Activated CD4-positive, alpha-beta T cell treated with anti-CD3 and anti-CD28 coated beads for 36 hours (primary cell): ENCODE measurements at regions of chr20 and their contacts with region 1.

Region 1: GRCh38 chr20:21031666-21032065 is 74.5 kb downstream of the LINC00237 start:
- DNase-seq: no peak
- ATAC-seq: no peak
- H3K4me3 Mint-ChIP-seq: no peak overlapping the region
- H3K27ac Mint-ChIP-seq: no peak overlapping the region
- H3K4me1 Mint-ChIP-seq: no peaks in the 10 kb centered on the region
- H3K27me3 Mint-ChIP-seq: peaks cover 16% of the 10 kb centered on the region

Region 2: DNA sequence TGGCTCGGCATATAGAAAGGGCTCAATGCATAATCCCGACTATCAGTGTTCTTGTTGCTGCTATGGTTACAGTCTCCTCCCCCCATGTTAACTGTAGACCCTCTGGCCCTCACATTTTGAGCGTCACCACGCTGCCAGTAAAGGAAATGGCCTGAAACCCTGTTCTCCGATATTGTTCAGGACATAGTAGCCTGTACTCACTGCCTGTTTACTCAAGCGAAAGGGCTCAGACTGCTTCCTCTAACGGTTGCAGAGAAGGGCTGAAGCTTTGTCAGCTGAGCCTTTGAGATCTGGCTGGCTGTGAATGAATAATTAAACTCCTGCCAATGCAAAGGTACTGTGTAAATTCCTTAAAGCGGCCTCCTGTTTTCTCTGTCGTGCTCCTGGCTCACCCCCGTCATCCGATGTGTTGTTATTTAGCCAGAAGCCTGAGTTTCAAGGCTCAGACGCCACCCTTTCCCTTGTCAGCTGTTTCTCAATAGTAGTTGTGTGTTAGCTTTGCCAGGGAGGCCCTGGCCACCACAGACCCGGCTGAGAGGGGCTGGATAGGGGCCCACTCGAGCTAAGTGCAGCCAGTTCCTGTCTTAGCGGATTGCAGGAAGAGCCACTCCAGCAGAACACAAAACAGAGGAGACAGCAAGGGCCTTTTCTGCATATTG is 288.0 kb before region 1 on chr20:
- CTCF ChIA-PET with region 1: no interaction called
- POLR2A ChIA-PET with region 1: no interaction called
- intact Hi-C with region 1: no loop called
- DNase-seq: no peak
- ATAC-seq: no peak
- H3K4me3 Mint-ChIP-seq: no peak overlapping the region
- H3K27ac Mint-ChIP-seq: no peak overlapping the region
- H3K4me1 Mint-ChIP-seq: no peaks in the 10 kb centered on the region
- H3K27me3 Mint-ChIP-seq: peaks cover 9% of the 10 kb centered on the region

Region 3: DNA sequence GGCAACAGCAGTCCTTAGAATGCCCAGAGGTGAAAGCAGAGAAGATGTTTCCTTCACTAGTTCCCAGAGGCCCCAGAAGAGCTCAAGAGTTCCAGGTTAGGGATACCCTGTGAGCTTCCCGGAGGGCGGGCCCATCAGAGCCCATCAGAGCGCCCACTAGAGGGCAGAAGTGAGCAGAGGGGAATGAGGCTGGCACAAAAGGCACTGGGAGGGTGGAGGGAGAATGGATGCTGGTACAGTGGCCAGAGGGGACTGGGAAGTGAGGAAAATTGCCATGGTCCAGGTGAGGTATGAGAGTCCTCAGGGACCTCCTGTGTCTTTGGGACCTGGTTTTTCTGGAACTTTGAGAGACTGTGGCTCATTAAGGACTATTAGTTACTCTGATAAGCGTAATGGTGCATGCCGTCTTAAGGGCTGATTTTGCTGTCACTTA is 17.2 kb after region 1 on chr20:
- CTCF ChIA-PET with region 1: interaction called, 13 read pairs
- POLR2A ChIA-PET with region 1: no interaction called
- intact Hi-C with region 1: no loop called
- DNase-seq: peak; percentile 74
- ATAC-seq: no peak
- H3K4me3 Mint-ChIP-seq: no peak overlapping the region
- H3K27ac Mint-ChIP-seq: no peak overlapping the region
- H3K4me1 Mint-ChIP-seq: no peaks in the 10 kb centered on the region
- H3K27me3 Mint-ChIP-seq: peaks cover 29% of the 10 kb centered on the region